ENCODE measurements at regions of chr6 and their contacts with region 1.

Region 1: DNA sequence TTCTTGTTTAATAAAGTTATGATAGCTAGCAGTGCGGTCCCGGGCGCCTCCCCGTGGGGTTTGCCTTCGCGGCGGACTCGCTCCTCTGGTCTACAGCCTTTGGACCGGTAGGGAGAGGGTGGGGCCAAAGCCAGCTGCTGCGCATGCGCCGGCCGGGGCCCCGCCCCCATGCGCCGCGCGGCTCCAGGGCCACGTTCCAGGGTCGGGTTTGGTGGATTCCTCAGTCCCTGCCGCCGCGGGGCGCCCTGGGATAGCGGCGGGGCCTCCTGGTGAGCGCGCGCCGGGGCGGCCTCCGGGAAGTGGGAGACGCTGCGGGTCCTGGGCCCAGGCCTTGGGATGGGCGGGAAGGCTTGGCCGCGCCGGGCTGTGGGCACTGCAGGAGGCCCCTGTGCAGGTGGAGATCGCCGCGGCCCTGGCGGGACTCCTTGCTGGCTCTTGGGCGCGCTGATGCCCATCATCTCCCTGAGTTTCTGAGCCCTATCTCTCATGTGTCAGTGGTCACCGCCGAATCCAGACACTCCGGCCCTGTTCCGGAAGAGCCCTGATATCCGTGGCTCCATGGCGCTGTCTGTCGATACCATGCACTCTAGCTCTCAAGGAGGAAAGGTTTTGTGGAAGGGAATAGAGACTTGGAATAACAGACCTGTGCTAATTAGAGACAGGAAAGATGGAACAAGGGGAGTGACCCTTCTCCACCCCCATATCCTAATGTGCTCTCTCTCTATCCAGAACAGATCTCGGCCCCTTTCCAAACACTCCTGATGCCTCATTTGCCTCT is at the start of gene VARS2:
- DNase-seq: peak; percentile 89
- H3K4me3 Mint-ChIP-seq: peak within 1 kb of the TSS; percentile 88
- H3K27ac Mint-ChIP-seq: peak within 1 kb of the TSS; percentile 90
- H3K4me1 Mint-ChIP-seq: peaks cover 27% of the 10 kb centered on the region
- H3K27me3 Mint-ChIP-seq: no peaks in the 10 kb centered on the region

Region 2: GRCh38 chr6:30821862-30822782 is 92.1 kb before region 1 on chr6:
- CTCF ChIA-PET with region 1: interaction called, 50 read pairs
- DNase-seq: no peak
- H3K4me3 Mint-ChIP-seq: no peak overlapping the region
- H3K27ac Mint-ChIP-seq: no peak overlapping the region
- H3K4me1 Mint-ChIP-seq: peaks cover 61% of the 10 kb centered on the region
- H3K27me3 Mint-ChIP-seq: no peaks in the 10 kb centered on the region

Region 3: GRCh38 chr6:30828027-30828960 is 86.0 kb before region 1 on chr6:
- CTCF ChIA-PET with region 1: interaction called, 50 read pairs
- DNase-seq: peak; percentile 88
- H3K4me3 Mint-ChIP-seq: peak overlapping the region; percentile 86
- H3K27ac Mint-ChIP-seq: peak overlapping the region; percentile 75
- H3K4me1 Mint-ChIP-seq: peaks cover 69% of the 10 kb centered on the region
- H3K27me3 Mint-ChIP-seq: no peaks in the 10 kb centered on the region

Region 4: GRCh38 chr6:30931969-30932645 is 17.8 kb after region 1 on chr6 and contains the start of gene SFTA2:
- CTCF ChIA-PET with region 1: no interaction called
- DNase-seq: no peak
- H3K4me3 Mint-ChIP-seq: no peak within 1 kb of the TSS
- H3K27ac Mint-ChIP-seq: no peak within 1 kb of the TSS
- H3K4me1 Mint-ChIP-seq: no peaks in the 10 kb centered on the region
- H3K27me3 Mint-ChIP-seq: peaks cover 39% of the 10 kb centered on the region

Region 5: DNA sequence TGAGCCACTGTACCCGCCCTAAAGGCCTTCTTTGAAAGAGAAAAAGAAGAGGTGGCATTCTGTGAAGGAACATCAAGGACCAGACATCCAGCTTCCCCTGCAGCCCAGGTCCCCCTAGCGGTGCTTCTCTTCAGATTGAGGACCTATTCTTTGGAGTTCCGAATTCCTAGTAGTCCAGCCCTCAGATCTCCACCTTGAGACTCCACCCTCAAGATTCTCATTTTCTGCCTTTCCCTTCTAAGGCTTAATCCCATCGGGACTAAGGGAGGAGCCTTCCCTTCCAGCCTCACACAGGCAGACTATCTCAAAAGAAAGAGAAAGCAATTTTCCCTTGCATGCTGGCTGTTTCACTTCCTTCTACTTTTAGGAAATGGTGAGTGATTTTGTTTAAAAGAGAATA is 128.5 kb after region 1 on chr6:
- CTCF ChIA-PET with region 1: interaction called, 15 read pairs
- DNase-seq: peak; percentile 27
- H3K4me3 Mint-ChIP-seq: no peak overlapping the region
- H3K27ac Mint-ChIP-seq: no peak overlapping the region
- H3K4me1 Mint-ChIP-seq: peaks cover 3% of the 10 kb centered on the region
- H3K27me3 Mint-ChIP-seq: peaks cover 45% of the 10 kb centered on the region

Region 6: GRCh38 chr6:31068669-31069340 is 154.5 kb after region 1 on chr6:
- CTCF ChIA-PET with region 1: interaction called, 46 read pairs
- DNase-seq: peak; percentile 78
- H3K4me3 Mint-ChIP-seq: no peak overlapping the region
- H3K27ac Mint-ChIP-seq: no peak overlapping the region
- H3K4me1 Mint-ChIP-seq: no peaks in the 10 kb centered on the region
- H3K27me3 Mint-ChIP-seq: peaks cover 7% of the 10 kb centered on the region

Region 7: DNA sequence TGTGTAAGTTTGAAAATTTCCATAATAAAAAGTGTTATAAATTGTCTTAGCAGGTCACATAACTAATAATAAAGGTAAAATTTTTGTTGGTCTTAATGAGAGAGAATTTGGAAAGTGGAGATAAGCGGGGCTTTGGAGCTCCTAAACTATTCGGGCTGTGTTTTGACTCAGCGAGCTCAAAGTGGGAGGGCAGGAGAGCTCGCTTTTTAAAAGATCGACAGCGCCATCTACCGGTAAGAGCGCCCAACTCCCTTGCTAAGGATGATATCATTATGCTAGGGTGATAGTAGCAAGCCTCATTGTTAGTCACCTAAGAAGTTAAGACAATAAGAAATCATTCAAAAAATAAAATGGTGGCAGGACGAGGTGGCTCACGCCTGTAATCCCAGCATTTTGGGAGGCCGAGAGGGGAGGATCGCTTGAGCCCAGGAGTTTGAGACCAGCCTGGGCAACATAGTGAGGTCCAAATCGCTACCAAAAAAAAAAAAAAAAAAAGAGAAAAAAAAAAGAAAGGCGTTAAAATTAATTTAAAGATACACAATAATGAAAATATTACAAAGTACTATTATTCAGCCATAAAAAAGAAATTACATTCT is 173.3 kb after region 1 on chr6:
- CTCF ChIA-PET with region 1: interaction called, 202 read pairs
- DNase-seq: peak; percentile 92
- H3K4me3 Mint-ChIP-seq: no peak overlapping the region
- H3K27ac Mint-ChIP-seq: no peak overlapping the region
- H3K4me1 Mint-ChIP-seq: peaks cover 7% of the 10 kb centered on the region
- H3K27me3 Mint-ChIP-seq: peaks cover 46% of the 10 kb centered on the region

Measured in activated naive CD4-positive, alpha-beta T cell treated with anti-CD3 and anti-CD28 coated beads, Interleukin-2, amount 10 ng/mL, durations not matched to agents 7 days and 5 days (primary cell).